Ovary (tissue), 10 donors: ENCODE measurements at regions of chr19 and their contacts with region 1.

Region 1: DNA sequence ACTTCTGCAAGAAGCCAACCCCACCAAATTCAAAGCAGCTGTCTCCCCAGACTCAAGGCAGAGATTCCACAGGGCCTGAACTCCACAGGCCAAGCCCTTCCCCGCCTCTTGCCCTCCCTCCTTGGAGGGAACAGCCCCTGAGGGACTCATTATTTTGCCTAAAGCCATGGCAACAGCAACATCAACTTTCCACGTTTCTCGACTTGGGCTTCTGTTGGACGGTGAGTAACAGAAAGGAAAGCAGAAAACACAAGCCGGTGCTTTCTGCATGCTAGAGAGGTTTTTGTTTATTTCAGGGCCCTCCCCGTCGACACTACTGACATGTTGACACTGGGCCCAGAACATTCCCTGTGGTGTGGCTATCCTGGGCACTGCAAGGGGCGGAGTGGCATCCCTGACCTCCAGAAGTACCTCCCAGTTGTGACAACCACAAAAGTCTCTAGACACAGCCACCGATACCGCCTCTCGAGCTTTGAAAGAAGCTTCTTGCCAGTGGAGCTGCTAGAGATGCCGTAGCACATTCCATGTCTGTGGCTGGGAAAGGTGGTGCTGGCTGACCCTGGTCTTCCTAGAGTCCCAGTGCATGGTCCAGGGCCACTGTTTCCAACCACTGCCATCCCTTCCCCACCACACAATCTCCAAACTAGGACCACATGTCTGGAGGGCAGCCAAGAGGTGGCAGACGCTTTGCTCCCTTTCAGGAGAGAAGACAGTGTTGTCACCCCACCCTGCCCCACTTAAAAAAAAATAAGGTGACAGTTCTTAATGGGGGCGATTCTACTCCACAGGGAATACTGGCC is 12.8 kb downstream of the CAPS start:
- DNase-seq: peak in 3 of 5 donors; percentile 34 to 64 (median 62)
- H3K4me3 ChIP-seq: no peak overlapping the region
- H3K27ac ChIP-seq: no peak overlapping the region
- H3K4me1 ChIP-seq: no peaks in the 10 kb centered on the region
- H3K27me3 ChIP-seq: no peaks in the 10 kb centered on the region
- CTCF ChIP-seq: no peak
- EP300 ChIP-seq: no peak
- POLR2A ChIP-seq: no peak

Region 2: DNA sequence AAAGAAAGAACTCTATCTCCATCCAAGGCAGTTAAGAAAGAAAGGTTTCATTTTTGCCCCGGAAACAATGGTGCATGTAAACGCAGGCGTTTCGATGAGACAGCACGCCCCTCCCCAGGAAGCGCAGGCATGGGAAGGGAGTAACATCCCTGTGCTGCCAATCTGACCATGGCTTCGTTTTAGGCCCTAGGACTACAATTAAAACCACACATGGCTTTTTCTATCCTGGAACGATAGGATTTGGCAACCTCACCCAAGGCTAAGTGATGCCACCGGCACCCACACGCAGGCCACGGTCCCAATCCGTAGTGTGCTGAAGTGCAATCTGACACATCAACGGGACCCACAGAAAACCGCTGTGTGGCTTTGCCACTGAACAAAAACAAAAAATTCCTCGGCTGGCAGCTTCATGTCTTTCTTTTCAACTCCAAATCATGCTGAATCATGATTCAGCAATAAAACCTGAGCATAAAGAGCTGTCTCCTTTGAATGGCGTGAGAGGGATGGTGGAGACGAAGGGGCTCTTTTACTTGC is 26.9 kb after region 1 on chr19:
- intact Hi-C with region 1: loop called in 1 of 4 experiments (anchors 1 kb)
- DNase-seq: no peak
- H3K4me3 ChIP-seq: no peak overlapping the region
- H3K27ac ChIP-seq: no peak overlapping the region
- H3K4me1 ChIP-seq: peaks cover 21% of the 10 kb centered on the region
- H3K27me3 ChIP-seq: no peaks in the 10 kb centered on the region
- CTCF ChIP-seq: no peak
- EP300 ChIP-seq: no peak
- POLR2A ChIP-seq: no peak

Region 3: DNA sequence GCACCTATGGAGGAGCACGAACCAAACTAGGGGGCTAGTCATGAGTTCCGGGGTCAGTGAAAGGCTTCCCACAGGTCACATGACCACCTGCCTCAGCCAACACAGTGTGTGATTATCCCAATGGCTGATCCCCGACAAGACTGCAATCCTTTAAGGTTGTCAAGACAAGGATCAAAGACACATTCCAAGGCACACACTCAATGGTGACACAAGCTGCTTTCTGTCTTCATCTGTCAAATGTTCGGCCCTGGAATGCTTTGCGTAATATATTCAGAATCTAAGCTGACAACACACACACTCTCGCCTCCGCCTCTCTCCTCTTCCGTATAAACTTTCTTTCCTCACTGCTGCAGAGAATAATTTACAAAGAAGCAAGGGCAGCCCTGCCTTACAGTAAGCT is 39.4 kb after region 1 on chr19:
- intact Hi-C with region 1: no loop called
- DNase-seq: no peak
- H3K4me3 ChIP-seq: no peak overlapping the region
- H3K27ac ChIP-seq: no peak overlapping the region
- H3K4me1 ChIP-seq: peaks cover 36% of the 10 kb centered on the region
- H3K27me3 ChIP-seq: no peaks in the 10 kb centered on the region
- CTCF ChIP-seq: no peak
- EP300 ChIP-seq: no peak
- POLR2A ChIP-seq: no peak

Region 4: DNA sequence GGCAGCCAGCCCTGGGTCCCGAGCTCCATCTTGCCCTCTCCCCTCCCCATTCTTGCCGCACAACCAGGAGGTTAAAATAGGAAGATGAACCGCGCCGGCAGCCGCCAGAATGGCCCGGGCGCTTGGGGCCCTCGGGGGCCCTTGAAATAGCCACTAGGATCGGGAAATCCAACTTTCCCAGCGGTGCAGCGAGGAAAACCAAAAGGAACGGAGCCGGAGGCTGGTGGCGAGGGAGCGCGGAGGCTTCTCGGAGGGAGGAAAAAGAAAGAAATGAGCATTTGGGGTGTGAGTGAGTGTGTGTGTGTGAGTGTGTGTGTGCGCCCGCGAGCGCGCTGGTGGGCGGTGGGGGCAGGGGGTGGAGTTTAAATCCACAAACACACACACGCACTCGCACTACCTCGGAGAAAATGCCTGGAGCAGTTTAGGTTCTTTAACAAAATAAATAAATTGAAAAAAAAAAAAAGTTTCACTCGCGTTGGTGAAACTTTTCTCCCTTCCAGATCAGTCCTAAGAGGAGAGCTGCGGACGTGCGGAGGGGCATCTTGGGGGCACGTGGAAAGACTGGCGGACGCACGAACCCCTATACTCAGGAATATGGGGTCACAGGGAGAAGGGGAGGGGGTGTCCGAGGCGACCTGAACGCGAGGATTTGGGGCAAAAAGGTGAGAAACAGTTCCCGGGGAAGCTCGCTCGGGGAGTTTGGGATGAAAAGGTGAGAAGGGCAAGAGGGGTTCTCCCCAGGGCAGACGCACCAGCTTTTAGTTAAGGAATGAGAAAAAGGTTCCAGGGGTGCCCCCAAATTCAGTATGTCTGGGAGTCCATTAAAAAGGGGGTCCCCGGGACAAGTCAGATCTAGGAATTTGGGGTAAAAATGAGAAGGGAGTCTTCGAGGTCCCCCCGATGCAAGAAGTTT is 182.1 kb after region 1 on chr19:
- intact Hi-C with region 1: no loop called
- DNase-seq: peak; percentile 72 to 85 (median 79)
- H3K4me3 ChIP-seq: peak overlapping the region; percentile 85
- H3K27ac ChIP-seq: peak overlapping the region; percentile 2 to 49
- H3K4me1 ChIP-seq: peaks cover 2% of the 10 kb centered on the region
- H3K27me3 ChIP-seq: no peaks in the 10 kb centered on the region
- CTCF ChIP-seq: peak in 1 of 3 donors; percentile 23
- EP300 ChIP-seq: no peak
- POLR2A ChIP-seq: peak; percentile 63